Posterior cingulate gyrus (tissue), 11 donors: ENCODE measurements at regions of chr9 and their contacts with region 1.

Region 1: DNA sequence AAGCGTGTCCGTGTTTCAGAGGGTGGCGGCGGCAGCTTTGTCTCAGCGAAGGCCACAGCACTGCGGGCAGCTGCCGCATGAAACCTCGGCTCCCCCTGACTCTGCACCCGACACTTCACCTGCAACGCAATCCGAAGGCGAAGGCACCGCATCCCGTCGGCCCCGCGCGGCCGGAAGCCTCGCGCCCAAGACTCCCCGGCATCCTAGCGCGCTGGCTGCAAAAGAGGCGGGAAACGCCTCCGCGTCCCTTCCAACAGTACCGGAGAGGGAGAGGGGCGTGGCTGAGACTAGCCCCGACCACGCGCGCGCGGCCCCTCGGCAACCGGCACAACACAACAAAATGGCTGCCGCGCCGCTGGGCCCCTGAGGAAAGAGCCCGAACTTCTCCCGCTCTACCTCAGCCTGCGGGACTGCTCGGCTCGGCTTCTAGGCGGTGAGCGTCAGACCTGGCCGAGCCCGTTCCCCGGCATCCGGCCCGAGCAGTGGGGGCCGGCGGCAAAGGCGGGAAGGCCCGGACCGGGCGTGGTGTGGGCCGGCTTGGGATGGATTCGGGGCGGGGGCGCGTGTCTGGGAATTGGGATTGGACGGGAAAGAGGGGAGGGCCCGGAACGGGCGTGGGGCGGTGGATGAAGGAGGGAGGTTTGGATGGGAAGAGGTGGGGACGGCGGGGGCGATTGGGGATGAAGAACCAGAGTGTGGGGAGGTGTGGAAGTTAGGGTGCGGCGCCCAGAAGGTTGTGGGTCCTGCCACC is at the start of gene CNTRL:
- DNase-seq: peak; percentile 73 to 98 (median 86)

Region 2: GRCh38 chr9:120875954-120876841 is 198.6 kb before region 1 on chr9:
- intact Hi-C with region 1: loop called (anchors 10 kb)
- DNase-seq: peak; percentile 49 to 96 (median 76)

Region 3: DNA sequence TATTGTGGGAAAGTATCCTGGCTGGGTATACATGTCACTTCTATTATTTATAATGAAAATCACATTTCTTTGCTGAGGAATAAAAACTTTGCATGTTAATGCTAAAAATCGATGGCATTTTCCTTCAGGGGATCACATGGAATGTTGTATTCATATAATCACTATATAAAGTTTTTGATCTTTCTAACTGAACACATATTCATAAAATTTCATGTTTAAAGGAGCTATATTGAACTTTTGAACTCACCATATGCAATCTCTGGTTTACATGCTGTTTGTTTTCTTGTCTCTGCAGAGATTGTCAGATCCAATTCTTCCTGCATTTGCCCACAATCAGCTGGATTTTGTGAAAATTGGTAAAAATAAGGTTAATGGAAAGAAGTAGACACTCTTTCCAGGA is 114.8 kb before region 1 on chr9:
- intact Hi-C with region 1: no loop called
- DNase-seq: no peak

Region 4: GRCh38 chr9:121121582-121122087 is 46.8 kb after region 1 on chr9:
- intact Hi-C with region 1: loop called (anchors 10 kb)
- DNase-seq: peak; percentile 90 to 99 (median 95)

Region 5: GRCh38 chr9:121201738-121202533 is 127.1 kb after region 1 on chr9 and contains the start of gene RAB14:
- intact Hi-C with region 1: loop called (anchors 10 kb)
- DNase-seq: peak; percentile 99 to 100 (median 99)